Head of caudate nucleus (tissue), 42 donors: ENCODE measurements at regions of chr11 and their contacts with region 1.

Region 1: GRCh38 chr11:76444384-76445123 is at the start of gene EMSY:
- DNase-seq: peak; percentile 95 to 100 (median 99)

Region 2: DNA sequence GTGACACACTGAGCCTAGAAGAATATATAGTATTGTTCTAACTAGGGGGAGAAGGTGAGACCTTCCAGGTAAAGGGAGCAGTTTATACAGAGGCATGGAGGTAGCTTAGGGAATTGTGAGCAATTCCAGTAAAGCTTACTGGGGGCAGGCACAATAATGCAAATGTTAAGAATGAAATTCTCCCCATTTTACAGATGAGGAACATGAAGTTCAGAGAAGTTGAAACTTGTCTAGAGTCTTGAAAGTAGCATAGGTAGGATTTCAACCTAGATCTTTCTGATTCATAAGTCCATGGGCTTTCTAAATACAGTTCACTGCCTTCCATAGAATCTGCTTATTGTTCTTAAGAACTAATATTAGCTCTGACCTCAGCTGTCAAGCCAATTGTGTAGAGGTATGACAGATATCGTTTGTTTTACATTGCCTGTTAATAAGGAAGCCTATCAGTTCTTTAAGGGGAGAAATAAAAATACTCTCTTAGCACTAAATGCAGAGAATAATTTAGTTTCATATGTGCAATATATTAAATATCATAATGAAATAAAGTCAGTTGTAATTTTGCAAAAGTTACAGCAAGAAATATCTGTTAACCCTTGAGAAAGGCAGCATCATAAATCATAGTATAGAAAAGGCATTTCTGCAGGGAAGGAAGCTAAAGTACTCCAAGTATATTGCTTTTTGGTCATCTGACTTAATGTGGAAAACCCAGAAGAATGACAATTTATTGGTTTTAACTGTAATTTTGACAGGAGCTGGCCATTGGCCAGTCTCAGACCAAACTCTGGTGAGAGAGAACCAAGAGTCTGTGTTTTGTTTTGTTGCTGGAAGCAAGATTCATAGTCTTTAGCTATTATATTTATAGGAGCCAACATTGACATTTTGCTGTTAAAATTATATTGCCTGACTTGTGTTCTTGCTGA is 447.8 kb before region 1 on chr11:
- intact Hi-C with region 1: no loop called
- DNase-seq: no peak

Region 3: GRCh38 chr11:76148941-76149613 is 295.5 kb before region 1 on chr11:
- intact Hi-C with region 1: no loop called
- DNase-seq: no peak

Region 4: DNA sequence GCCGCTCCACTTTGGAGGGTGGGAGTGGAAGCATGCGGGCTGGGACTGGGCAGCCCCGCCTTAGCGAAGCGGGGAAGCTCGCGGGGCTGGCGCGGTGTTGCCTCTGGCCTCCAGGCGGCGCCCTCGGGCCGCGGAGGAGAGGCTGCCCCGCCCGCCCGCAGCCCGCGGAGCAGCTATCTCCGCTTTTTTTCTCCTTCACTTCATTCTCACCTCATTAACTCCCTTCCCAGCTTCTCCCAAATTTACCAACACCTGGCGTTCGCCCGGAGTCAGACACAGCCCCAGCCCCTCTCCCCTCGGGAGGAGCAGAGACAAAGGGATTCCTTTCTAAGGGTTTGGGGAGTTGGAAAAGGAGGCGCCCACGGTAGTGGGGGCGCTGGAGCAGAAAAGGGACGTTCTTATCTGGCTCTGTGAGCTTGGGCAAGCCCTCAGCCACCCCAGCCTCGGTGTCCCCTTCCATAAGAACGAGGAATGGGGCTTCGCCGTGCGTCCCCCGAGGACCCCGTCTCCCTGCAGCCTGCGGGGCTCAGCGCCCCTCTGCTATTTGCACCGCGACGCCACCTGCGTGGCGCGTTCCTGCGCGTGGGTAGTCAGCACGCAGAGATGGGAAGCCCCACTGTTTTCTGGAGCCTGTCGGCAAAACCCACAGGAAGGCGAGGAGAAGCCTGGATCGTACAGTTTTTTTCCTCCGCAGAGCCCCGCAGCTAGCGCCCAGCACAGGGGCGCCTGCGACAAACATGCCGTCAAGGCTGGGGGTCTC is 236.7 kb before region 1 on chr11:
- intact Hi-C with region 1: loop called (anchors 10 kb)
- DNase-seq: peak; percentile 25 to 91 (median 79)

Region 5: GRCh38 chr11:76235233-76236091 is 209.1 kb before region 1 on chr11:
- intact Hi-C with region 1: loop called (anchors 10 kb)
- DNase-seq: peak; percentile 86 to 99 (median 94)

Region 6: GRCh38 chr11:76380967-76381719 is 63.4 kb before region 1 on chr11 and contains the starts of genes GVQW3 and THAP12:
- intact Hi-C with region 1: loop called (anchors 2 kb)
- DNase-seq: peak; percentile 88 to 99 (median 97)